RWPE1 (cell line): ENCODE measurements at regions of chr5 and their contacts with region 1.

Region 1: DNA sequence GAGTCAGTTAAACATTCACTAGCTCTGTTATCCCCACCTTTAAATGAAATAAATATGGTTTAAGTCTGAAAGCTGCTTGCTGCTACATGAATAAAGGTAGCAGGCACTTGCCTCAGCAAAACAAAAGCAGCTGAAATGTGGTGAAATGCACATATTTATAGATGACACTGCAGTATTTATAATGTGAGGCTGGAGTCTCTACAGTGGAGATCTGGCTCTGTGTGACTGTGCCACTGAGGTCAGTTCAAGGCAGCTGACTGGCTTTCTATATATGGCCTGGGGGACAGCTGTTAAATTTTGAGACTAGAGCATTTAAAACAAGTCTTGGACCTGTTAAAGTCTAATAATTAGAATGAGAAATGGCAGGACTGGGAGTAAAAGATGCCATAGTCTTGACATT is 859.6 kb upstream of the SEMA6A start:
- DNase-seq: no peak
- H3K27ac ChIP-seq: no peak overlapping the region
- CTCF ChIP-seq: no peak

Region 2: DNA sequence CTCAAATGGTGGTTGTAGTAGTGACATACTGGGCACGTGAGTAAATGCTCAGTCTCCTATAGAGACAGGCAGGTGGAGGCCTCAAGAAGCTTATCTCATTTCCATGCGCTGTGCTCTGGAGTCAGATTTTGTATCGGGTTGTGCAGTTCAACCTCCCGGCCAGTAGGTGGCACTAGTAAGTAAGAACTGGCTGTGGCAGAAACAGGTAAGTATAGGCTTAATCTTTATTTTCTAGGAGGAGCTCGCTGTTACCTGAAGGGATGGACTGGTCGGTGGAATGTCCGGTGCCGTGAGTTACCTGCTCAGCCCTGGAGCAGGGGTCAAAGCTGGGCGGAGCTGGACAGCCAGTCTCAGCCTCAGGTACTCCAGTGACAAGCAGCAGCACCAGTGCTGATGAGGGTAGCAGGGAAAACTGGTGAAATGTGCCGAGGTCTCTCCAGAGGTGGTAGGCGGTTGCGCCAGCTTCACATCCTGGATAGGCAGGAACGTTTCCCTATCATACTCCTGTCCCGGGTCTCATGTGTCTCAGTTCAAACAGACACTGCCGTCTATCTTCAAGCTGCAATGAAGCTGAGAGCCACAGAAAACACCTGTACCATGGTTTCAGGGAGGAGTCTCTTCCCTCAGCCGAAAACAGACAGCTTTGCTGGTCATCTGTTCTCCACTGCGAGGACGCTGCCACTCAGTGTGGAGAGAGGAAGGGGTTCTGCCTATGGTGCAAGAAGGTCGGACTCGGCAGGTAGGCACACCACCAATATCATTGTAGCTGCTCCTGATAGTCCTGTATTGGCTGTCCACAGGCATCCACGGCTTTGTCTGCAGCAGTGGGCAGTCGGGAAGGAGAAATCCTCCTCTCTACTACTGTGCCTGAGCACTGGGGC is 20.7 kb after region 1 on chr5:
- CTCF ChIA-PET with region 1: interaction called, 12 read pairs
- POLR2A ChIA-PET with region 1: no interaction called
- DNase-seq: peak; percentile 45
- H3K27ac ChIP-seq: no peak overlapping the region
- CTCF ChIP-seq: peak; percentile 88